Calu3 (cell line): ENCODE measurements at regions of chr11 and their contacts with region 1.

Region 1: GRCh38 chr11:117232092-117232878 is at the start of gene RNF214:
- DNase-seq: peak; percentile 72
- H3K4me3 Mint-ChIP-seq: peak within 1 kb of the TSS; percentile 100
- H3K27ac Mint-ChIP-seq: peak within 1 kb of the TSS; percentile 91
- H3K4me1 Mint-ChIP-seq: peaks cover 14% of the 10 kb centered on the region
- H3K27me3 Mint-ChIP-seq: no peaks in the 10 kb centered on the region
- CTCF ChIP-seq: peak; percentile 83
- total RNA-seq, gene RNF214: 19.2 and 20.0 TPM in 2 replicates

Region 2: DNA sequence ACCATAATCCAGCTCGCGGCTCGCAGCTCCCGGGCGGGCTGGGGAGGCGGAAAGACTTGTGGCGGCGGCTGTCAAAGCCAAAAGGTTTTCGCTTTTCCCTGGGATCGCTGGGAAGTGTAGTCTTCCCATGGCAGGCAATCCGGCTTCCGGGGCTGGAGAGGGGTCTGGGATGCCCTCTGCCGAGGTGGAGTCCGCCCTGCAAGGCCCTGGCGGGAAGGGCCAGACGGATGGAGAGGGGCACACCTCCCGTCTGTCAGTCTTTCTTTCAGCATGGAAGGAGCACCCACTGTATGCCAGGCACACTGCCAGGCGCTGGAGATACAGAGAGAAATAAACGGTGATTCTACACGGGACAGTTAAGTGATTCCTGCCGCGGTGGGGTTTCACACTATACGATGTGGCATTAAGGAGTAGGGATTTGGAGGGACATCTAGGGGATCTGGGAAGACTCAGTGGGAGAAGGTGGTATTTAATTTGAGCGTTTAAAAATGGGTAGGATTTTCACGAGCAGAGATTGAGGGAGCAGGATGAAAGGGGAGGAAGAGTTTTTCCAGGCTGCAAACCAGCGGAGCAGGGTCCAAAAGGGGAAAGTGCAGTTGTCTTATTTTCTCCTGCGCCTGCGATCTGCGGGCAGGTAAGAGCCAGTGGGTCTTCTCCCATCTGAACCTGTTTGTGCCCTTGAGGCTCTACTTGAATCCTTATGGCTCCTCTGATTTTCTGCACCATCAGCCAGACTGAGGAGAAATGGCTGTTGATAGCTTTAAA is 84.1 kb after region 1 on chr11 and contains the start of gene BACE1:
- CTCF ChIA-PET with region 1: no interaction called
- intact Hi-C with region 1: loop called (anchors 5 kb)
- DNase-seq: peak; percentile 73
- H3K4me3 Mint-ChIP-seq: peak within 1 kb of the TSS; percentile 67
- H3K27ac Mint-ChIP-seq: no peak within 1 kb of the TSS
- H3K4me1 Mint-ChIP-seq: peaks cover 8% of the 10 kb centered on the region
- H3K27me3 Mint-ChIP-seq: no peaks in the 10 kb centered on the region
- CTCF ChIP-seq: no peak
- total RNA-seq, gene BACE1: 9.6 and 10.7 TPM in 2 replicates